ACHN (cell line): ENCODE measurements at regions of chr17 and their contacts with region 1.

Region 1: DNA sequence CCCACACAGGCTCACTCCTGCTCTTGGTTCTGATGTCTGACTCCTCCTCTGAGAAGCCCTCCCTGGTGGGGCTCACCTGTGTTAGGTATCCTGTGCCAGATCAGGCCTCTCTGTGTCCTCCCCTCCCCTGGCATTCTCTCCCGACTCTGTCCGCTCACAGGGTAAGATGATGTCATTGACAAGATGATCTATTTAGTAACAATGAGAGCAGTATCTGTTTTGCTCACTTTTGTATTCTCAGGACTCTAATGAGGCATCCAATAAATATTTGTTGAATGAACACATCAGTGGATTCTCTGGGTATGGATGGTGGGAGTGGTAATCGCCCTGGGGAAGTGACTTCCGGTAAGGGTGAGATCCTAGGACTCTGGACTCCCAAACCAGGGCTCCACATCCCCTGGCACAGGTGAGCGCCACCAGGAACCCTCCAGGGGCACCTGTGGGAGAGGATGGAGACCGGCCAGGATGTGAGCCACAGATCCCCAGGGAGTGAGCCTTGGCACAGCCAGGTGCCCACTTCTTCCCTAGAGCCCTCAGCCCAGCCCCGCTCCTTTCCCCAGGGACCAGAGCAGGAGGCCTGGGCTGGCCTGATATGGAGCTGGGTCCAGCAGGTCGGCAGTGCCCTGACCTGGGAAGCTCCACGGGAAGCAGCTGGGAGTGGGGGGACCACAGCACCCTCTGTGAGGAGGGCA is 5.4 kb upstream of the HAP1 start:
- DNase-seq: peak; percentile 42

Region 2: DNA sequence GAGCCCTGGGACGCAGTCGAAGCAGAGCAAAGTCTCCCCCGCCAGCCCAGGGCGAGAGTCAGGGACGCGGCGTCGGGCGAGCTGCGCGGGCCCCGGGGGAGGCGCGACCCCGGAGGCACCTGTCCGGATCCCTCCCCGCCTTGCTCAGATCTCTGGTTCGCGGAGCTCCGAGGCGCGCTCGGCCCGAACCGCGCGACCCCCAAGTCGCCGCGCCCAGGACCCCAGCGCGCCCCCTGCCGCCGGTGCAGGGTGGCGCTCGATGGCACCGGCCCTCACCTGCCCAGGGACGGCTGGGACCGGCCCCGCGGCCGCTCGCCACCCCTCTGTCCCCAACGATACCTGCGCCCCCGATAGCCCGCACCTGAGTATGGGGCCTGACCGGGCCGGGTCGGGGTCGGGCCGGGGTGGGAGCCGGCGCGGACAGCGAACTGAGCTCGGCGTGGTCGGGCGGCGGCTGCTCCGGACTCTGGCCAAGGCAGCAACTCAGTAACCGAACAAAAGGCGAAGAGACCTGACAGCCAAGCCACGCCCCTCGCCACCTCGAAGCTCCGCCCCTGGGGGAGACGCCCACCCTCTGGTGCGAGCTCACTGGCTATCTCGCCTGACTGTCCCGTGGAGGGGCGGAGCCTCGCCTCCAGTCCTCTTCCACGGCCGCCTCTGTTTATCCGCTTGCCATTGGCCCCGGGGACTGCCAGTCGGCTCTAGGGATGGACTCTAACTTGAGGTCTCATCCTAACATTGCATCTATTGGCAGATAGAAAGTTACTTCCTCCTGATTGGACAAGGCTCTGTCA is 46.6 kb after region 1 on chr17 and contains the start of gene JUP:
- in situ Hi-C with region 1: no loop called
- DNase-seq: peak; percentile 99

Region 3: DNA sequence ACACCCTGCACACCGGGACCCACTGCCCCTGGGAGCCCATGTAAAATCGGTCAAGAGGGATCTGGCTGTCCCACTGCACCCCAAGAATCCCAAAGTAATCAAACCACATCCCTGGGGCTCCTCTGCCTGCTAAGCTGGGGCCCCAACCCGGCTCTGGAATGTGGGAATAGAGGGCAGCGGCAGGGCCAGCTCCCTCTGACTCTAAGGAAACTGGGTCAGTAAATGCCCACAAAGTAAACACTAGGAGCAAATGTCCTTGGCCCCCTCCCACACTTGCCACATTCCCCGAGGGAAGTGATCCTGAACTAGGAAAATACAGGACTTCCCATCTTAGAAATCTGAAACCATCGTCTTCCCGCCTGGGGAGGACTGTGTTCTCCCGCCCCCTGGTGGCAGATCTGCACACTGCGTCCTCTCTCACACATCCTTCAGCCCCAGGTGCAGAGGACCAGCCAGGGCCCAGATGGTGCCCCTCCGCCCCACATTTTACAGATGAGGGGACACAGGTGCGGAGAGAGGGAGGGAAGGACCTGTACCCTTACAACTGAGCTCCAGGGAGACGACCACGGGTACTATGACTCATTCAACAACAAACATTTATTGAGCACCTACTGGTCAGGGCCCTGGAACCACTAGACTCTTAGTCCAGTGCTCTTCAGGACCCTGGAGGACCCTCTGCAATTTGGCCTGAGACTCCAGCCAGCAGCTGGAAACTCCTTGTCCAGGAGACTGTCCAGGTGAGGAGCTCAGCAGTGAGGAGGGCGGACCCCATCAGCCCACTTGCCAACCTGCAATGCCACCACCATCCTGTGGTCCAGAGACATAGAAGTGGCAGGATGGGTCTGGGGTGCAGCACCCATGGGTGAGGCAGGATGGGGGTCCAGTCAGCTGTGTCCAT is 61.8 kb after region 1 on chr17:
- in situ Hi-C with region 1: loop called (anchors 10 kb)
- DNase-seq: peak; percentile 97